KBM-7 (cell line): ENCODE measurements at regions of chrX and their contacts with region 1.

Region 1: GRCh38 chrX:20442597-20442996 is 175.9 kb upstream of the RPS6KA3 start:
- DNase-seq: peak; percentile 84

Region 2: DNA sequence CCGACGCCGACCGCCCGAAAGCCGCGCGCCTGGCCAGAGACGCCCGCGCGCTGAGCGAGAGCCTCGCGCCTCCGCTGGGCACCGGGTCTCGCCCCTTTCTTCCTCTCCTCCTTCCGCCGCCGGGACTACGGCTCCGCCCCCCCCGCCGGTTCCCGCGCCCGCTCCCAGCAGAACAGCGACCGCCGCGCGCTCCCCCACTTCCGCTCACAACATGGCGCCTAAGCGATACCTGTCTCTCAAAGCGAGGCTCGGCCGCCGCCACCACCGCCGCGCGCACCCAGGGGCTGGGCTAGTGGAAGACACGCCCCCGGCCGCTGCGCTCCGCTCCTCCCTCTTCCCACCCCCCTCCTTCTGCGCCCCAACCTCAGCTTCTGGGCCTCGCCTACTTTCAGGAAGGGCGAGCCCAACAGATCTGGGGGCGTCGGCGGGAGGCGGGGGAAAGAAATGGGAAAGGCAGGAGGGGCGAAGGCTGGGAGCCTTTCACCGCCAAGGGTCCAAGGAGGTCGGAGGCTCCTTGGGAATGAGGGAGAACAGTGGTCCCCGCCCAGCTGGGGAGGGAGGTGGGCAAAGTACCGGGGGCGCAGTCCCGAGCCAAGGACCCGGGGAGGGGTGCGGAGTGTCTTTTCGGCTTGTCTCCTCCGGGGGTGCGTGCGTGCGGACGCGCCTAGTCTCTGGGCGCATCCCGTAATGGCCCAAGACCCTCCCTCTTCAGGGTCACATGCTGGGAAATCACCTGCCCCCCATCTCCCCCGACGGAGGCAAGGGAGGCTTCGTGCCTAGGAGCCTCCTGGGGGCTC is 175.6 kb before region 1 on chrX and contains the start of gene RPS6KA3:
- in situ Hi-C with region 1: loop called (anchors 25 kb)
- DNase-seq: peak; percentile 94